Left colon (tissue), 2 donors: ENCODE measurements at regions of chr1 and their contacts with region 1.

Region 1: GRCh38 chr1:205536759-205537361 is 32.4 kb downstream of the CDK18 start:
- DNase-seq: peak; percentile 76 to 86
- ATAC-seq: peak; percentile 93

Region 2: DNA sequence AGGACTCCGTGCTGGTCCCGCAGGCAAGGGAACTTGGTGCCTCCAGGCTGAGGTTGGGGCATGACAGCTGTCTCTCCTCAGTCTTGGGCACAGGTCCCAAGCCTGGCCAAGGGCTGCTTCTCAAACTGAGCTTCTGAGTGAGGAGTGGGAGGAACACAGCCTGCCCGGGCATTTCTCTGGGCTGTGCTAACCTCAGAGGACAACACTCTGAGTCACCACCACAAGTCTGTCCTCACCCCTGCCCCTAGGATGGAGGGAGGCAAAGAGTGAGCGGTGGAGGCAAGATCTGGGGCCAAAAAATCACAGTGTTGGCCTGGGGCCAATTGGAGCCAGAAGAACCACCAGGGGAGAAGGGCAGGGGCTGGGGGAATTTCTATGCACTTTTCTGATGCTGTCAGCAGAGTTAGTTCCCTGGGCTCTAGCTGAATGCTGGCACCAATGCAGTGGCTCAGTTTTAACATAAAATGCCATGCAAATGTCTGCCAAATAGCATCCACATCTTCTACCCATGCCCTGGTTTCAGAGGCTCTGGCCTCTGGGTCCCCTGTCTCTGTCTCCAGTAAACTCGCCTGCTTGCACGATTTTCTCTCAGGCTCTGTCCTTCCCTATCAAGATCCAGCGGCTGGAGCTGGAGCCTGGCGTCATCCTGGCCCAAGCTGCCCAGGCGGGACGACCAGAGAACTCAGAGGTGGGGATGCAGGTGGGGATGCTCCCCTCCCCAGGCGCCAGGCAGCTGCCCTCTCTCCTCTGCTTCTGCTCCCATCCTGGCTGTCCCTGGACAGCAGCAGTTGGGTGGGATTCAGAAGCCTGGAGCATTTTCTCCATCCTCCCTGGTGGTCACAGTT is 43.4 kb before region 1 on chr1:
- intact Hi-C with region 1: no loop called
- DNase-seq: no peak
- ATAC-seq: no peak

Region 3: DNA sequence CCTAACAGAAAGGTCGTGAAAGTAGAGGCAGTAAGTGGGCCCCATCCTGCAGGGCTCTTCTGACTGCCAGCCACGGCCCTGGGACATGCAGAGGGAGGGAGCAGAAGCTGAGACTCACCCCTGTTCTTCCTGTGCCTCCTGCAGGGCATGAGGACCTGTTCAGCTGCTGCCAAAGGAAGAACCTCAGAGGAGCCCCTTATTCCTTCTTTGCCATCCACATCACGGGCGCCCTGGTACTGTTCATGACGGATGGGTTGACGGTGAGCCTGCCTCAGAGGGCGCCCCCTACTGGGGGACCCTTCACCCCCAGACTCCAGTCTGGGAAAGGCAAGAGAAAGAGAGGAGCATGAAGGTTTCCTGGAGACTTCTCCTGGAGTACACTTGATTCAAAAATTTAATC is 47.9 kb after region 1 on chr1:
- intact Hi-C with region 1: no loop called
- DNase-seq: no peak
- ATAC-seq: no peak

Region 4: DNA sequence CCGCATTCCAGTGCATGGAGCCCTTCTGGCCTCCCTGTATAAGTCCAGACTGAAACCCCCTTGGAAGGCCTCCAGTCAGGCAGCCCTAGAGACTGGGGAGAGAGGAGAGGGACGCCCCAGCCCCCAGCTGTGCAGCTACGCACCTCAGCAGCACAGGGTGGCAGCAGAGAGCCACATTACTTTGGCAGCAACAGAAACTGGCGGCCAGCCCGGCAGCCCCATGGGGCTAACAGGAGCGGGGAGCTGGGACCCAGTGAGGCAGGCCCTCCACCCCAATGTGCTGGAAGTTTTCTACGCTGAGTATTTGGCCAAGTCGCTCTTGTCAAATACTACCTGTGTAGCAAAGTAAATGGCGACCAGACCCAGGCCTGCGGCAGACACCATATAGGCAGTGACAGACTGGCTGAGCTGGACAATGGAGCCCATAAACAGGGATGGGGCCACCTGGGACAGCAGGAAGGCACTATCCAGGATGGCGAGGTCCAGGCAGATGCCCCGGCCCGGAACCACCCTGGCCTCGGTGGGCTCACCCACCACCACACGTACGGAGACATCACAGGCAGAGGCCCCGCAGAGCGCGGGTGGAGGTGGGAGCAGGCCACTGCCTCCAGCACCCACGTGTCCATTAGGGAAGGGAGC is 122.2 kb after region 1 on chr1:
- intact Hi-C with region 1: loop called in 1 of 2 experiments (anchors 10 kb)
- DNase-seq: peak in 1 of 2 donors; percentile 87
- ATAC-seq: peak; percentile 84